Endothelial cell of umbilical vein (primary cell): ENCODE measurements at regions of chr3 and their contacts with region 1.

Region 1: GRCh38 chr3:17645072-17645698 is 97.2 kb downstream of the TBC1D5 start:
- DNase-seq: peak; percentile 76
- H3K4me3 ChIP-seq: no peak overlapping the region
- H3K27ac ChIP-seq: no peak overlapping the region
- H3K4me1 ChIP-seq: peaks cover 8% of the 10 kb centered on the region
- H3K27me3 ChIP-seq: no peaks in the 10 kb centered on the region
- CTCF ChIP-seq: peak; percentile 51 to 61
- POLR2A ChIP-seq: no peak

Region 2: DNA sequence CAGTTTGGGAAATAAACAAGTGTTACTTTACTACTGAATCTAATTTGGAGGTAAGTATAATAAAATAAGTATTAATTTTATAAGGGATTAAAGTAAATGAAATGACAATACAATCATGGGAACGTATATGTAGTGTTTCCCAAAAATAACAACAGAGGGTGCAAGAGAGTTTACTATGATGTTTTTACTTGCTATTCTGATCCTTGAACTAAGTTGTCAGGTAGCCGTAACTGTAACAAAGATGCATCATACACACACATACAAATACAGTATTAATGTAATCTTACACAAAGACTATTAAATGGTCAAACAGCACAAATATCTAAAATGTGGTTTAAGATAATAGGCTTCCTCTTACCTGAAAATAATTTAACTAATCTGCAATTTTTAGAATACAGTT is 214.2 kb before region 1 on chr3:
- CTCF ChIA-PET with region 1: interaction called, 15 read pairs
- POLR2A ChIA-PET with region 1: interaction called, 3 read pairs
- dilution Hi-C with region 1: no loop called
- intact Hi-C with region 1: loop called (anchors 10 kb)
- DNase-seq: peak; percentile 49
- H3K4me3 ChIP-seq: no peak overlapping the region
- H3K27ac ChIP-seq: no peak overlapping the region
- H3K4me1 ChIP-seq: no peaks in the 10 kb centered on the region
- H3K27me3 ChIP-seq: no peaks in the 10 kb centered on the region
- CTCF ChIP-seq: peak in 1 of 2 donors; percentile 14
- POLR2A ChIP-seq: no peak

Region 3: DNA sequence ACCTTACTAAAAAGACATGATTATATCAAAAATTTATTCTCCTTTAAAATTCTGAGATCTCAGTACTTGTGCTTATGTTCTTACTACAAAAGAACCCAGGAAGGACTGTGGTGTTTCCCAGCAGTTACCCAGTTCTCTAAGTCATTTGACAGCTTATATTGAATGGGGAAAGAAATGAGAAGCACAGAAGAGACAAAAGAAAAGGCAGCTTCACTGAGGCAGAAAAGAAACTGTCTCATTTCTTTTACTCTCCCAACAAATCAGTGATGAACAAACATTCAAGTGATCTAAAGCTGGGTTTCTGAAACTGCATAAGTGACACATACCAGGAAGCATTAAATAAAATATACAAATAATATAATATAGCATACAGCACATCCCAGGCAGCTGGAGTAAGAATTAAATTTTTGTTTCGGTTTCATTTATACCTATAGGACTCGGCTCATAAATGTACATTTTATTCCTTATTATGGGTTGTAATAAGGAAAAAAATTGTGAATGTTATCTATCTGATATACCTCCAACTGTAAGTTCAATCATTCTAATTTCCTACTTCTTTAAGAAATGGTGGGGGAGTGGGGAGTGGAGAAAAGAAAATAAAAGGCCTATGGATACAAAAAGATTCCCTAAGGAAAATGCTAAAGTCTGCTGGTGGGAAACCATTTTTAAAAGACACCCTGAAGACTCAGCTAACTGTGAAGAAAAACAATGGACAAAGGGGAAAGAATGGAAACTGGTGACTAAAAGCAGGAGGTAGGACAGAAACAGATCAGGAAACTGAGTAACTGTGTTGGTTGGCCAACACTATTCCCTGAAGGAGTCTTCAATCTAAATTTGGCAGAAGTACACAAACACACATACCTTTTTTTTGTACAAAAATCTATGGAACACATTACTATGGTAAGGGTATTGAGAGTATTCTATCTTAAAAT is 59.5 kb before region 1 on chr3:
- CTCF ChIA-PET with region 1: interaction called, 12 read pairs
- POLR2A ChIA-PET with region 1: no interaction called
- dilution Hi-C with region 1: no loop called
- intact Hi-C with region 1: no loop called
- DNase-seq: peak; percentile 62
- H3K4me3 ChIP-seq: no peak overlapping the region
- H3K27ac ChIP-seq: no peak overlapping the region
- H3K4me1 ChIP-seq: peaks cover 5% of the 10 kb centered on the region
- H3K27me3 ChIP-seq: no peaks in the 10 kb centered on the region
- CTCF ChIP-seq: no peak
- POLR2A ChIP-seq: no peak

Region 4: DNA sequence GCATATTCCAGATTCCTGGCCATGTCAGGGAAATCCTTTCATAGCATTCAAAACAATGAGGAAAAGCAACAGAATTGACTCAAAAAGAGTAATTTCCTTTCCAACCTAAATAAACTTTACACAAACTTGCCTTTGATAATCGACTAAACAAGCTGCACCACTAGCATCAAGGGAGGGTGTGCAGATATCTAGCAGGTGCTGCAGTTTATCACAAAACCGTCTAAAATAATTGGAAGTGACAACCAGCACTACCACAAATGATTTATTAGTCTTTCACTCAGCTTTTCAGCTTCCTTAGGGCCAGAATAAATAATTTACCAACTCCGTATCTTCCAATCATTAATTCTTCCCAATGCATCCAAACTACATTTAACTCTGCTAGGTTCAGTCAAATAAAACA is 25.6 kb after region 1 on chr3:
- CTCF ChIA-PET with region 1: interaction called, 12 read pairs
- POLR2A ChIA-PET with region 1: no interaction called
- dilution Hi-C with region 1: no loop called
- intact Hi-C with region 1: no loop called
- DNase-seq: peak; percentile 47
- H3K4me3 ChIP-seq: no peak overlapping the region
- H3K27ac ChIP-seq: no peak overlapping the region
- H3K4me1 ChIP-seq: no peaks in the 10 kb centered on the region
- H3K27me3 ChIP-seq: no peaks in the 10 kb centered on the region
- CTCF ChIP-seq: no peak
- POLR2A ChIP-seq: no peak

Region 5: GRCh38 chr3:17742108-17742879 is 97.1 kb after region 1 on chr3 and contains the start of gene TBC1D5:
- CTCF ChIA-PET with region 1: interaction called, 48 read pairs
- POLR2A ChIA-PET with region 1: no interaction called
- dilution Hi-C with region 1: no loop called
- intact Hi-C with region 1: loop called (anchors 1 kb)
- DNase-seq: peak; percentile 99
- H3K4me3 ChIP-seq: peak within 1 kb of the TSS; percentile 57 to 92 (median 72)
- H3K27ac ChIP-seq: peak within 1 kb of the TSS; percentile 81
- H3K4me1 ChIP-seq: peaks cover 27% of the 10 kb centered on the region
- H3K27me3 ChIP-seq: no peaks in the 10 kb centered on the region
- CTCF ChIP-seq: no peak
- POLR2A ChIP-seq: peak; percentile 82
- total RNA-seq, gene TBC1D5: 40.1 and 44.7 TPM in 2 replicates

Region 6: DNA sequence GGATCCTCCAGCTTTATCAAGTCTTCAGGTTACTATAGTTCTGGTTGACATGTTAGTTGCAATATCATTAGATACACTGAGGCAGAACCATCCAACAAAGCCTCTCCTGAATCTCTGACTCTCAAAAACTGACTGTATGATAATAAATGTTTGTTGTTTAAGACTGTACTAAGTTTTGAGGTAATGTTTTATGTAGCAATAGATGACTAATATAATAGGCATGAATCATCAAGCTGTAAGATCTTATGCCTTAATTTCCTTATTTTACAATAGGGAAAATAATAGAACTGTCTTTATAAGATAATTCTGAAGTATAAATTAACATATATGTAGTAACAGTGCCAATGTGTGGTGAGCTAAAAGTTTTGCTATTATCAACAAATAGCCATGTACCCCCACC is 186.2 kb after region 1 on chr3:
- CTCF ChIA-PET with region 1: interaction called, 17 read pairs
- POLR2A ChIA-PET with region 1: no interaction called
- dilution Hi-C with region 1: no loop called
- intact Hi-C with region 1: no loop called
- DNase-seq: no peak
- H3K4me3 ChIP-seq: no peak overlapping the region
- H3K27ac ChIP-seq: no peak overlapping the region
- H3K4me1 ChIP-seq: no peaks in the 10 kb centered on the region
- H3K27me3 ChIP-seq: peaks cover 0 to 6% of the 10 kb centered on the region in 2 experiments
- CTCF ChIP-seq: no peak
- POLR2A ChIP-seq: no peak